WTC11 (cell line): ENCODE measurements at regions of chr9 and their contacts with region 1.

Region 1: GRCh38 chr9:136978073-136978864 is 965 bp downstream of the PTGDS start:
- DNase-seq: peak; percentile 96
- ATAC-seq: peak; percentile 76
- H3K4me3 Mint-ChIP-seq: peak overlapping the region; percentile 66
- H3K27ac Mint-ChIP-seq: no peak overlapping the region
- H3K4me1 Mint-ChIP-seq: peaks cover 3% of the 10 kb centered on the region; the same call in 1 of the 2 replicates
- H3K27me3 Mint-ChIP-seq: peaks cover 3% of the 10 kb centered on the region; the same call in 1 of the 2 replicates
- CTCF ChIP-seq: no peak

Region 2: GRCh38 chr9:136835162-136835931 is 142.9 kb before region 1 on chr9:
- CTCF ChIA-PET with region 1: no interaction called
- POLR2A ChIA-PET with region 1: no interaction called
- DNase-seq: no peak
- ATAC-seq: no peak
- H3K4me3 Mint-ChIP-seq: no peak overlapping the region
- H3K27ac Mint-ChIP-seq: no peak overlapping the region
- H3K4me1 Mint-ChIP-seq: peaks cover 5% of the 10 kb centered on the region
- H3K27me3 Mint-ChIP-seq: no peaks in the 10 kb centered on the region
- CTCF ChIP-seq: no peak

Region 3: GRCh38 chr9:136849038-136849959 is 129.0 kb before region 1 on chr9 and contains the start of gene PHPT1:
- CTCF ChIA-PET with region 1: interaction called, 13 read pairs
- POLR2A ChIA-PET with region 1: interaction called, 4 read pairs
- DNase-seq: peak; percentile 99
- ATAC-seq: peak; percentile 75
- H3K4me3 Mint-ChIP-seq: peak within 1 kb of the TSS; percentile 94
- H3K27ac Mint-ChIP-seq: peak within 1 kb of the TSS; percentile 94
- H3K4me1 Mint-ChIP-seq: peaks cover 4% of the 10 kb centered on the region
- H3K27me3 Mint-ChIP-seq: peaks cover 3% of the 10 kb centered on the region
- CTCF ChIP-seq: no peak
- total RNA-seq, gene PHPT1: 138 to 176 TPM (median 173 TPM) in 3 replicates

Region 4: GRCh38 chr9:136991993-136992818 is 13.9 kb after region 1 on chr9 and contains the start of gene PAXX:
- CTCF ChIA-PET with region 1: interaction called, 34 read pairs
- POLR2A ChIA-PET with region 1: interaction called, 6 read pairs
- DNase-seq: peak; percentile 93
- ATAC-seq: peak; percentile 90
- H3K4me3 Mint-ChIP-seq: peak within 1 kb of the TSS; percentile 72
- H3K27ac Mint-ChIP-seq: no peak within 1 kb of the TSS
- H3K4me1 Mint-ChIP-seq: no peaks in the 10 kb centered on the region; the same call in 1 of the 2 replicates
- H3K27me3 Mint-ChIP-seq: peaks cover 34% of the 10 kb centered on the region
- CTCF ChIP-seq: no peak
- total RNA-seq, gene PAXX: 44.1 to 45.3 TPM (median 44.6 TPM) in 3 replicates

Region 5: GRCh38 chr9:137021979-137022619 is 43.8 kb after region 1 on chr9:
- CTCF ChIA-PET with region 1: interaction called, 10 read pairs
- POLR2A ChIA-PET with region 1: interaction called, 3 read pairs
- DNase-seq: peak; percentile 98
- ATAC-seq: peak; percentile 96
- H3K4me3 Mint-ChIP-seq: no peak overlapping the region
- H3K27ac Mint-ChIP-seq: no peak overlapping the region; the same call in 1 of the 2 replicates
- H3K4me1 Mint-ChIP-seq: no peaks in the 10 kb centered on the region; the same call in 1 of the 2 replicates
- H3K27me3 Mint-ChIP-seq: peaks cover 2% of the 10 kb centered on the region; the same call in 1 of the 2 replicates
- CTCF ChIP-seq: no peak

Region 6: DNA sequence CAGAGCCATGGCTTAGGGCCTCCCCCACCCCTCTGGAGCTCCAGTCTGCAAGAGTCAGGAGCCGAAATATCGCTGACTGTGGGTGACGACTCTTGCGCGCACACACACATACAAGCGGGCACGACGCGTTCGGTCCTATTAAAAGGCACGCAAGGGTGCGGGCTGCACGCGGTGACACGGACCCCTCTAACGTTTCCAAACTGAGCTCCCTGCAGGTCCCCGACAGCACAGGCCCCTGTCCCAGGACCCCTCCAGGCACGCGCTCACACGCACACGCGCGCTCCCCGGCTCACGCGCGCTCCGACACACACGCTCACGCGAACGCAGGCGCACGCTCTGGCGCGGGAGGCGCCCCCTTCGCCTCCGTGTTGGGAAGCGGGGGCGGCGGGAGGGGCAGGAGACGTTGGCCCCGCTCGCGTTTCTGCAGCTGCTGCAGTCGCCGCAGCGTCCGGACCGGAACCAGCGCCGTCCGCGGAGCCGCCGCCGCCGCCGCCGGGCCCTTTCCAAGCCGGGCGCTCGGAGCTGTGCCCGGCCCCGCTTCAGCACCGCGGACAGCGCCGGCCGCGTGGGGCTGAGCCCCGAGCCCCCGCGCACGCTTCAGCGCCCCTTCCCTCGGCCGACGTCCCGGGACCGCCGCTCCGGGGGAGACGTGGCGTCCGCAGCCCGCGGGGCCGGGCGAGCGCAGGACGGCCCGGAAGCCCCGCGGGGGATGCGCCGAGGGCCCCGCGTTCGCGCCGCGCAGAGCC is 160.6 kb after region 1 on chr9 and contains the start of gene GRIN1:
- CTCF ChIA-PET with region 1: no interaction called
- POLR2A ChIA-PET with region 1: no interaction called
- DNase-seq: peak; percentile 55
- ATAC-seq: peak; percentile 25
- H3K4me3 Mint-ChIP-seq: peak within 1 kb of the TSS; percentile 55
- H3K27ac Mint-ChIP-seq: no peak within 1 kb of the TSS
- H3K4me1 Mint-ChIP-seq: peaks cover 6% of the 10 kb centered on the region; the same call in 1 of the 2 replicates
- H3K27me3 Mint-ChIP-seq: peaks cover 75% of the 10 kb centered on the region
- CTCF ChIP-seq: no peak
- total RNA-seq, gene GRIN1: 4.0 to 6.6 TPM (median 4.1 TPM) in 3 replicates